Activated naive CD4-positive, alpha-beta T cell treated with anti-CD3 and anti-CD28 coated beads for 36 hours (primary cell): ENCODE measurements at regions of chr7 and their contacts with region 1.

Region 1: GRCh38 chr7:143263266-143264195 is at the start of gene GSTK1:
- DNase-seq: peak; percentile 90
- H3K4me3 Mint-ChIP-seq: peak within 1 kb of the TSS; percentile 96
- H3K27ac Mint-ChIP-seq: peak within 1 kb of the TSS; percentile 96
- H3K4me1 Mint-ChIP-seq: peaks cover 55% of the 10 kb centered on the region
- H3K27me3 Mint-ChIP-seq: no peaks in the 10 kb centered on the region
- total RNA-seq, gene GSTK1: 186 to 187 TPM

Region 2: DNA sequence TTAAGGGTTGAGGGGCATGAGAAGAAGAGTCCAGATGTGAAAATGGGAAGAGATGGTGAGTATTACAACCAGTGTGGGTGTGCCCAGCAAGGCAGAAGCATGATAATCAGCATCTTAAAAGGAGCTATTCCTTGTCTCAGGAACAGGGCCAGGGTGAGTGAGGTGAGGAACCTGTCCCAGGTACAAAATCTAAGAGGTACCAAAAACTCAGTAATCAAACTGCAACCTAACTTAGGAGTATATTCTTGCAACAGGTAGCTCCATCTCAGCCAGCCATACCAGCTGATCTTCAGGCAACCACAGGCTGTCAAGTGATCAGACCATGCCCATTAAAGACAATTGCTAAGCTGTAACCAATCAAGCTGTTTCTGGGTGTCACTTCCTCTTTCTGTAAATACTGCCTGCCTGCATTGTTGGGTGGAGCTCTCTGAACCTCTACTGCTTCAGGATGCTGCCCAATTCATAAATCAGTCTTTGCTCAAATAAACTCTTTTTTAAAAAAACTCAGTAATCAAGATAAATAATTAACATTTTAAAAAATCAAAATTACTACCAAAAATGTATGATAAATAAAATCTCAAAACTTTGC is 308.8 kb before region 1 on chr7:
- CTCF ChIA-PET with region 1: no interaction called
- intact Hi-C with region 1: no loop called
- DNase-seq: no peak
- H3K4me3 Mint-ChIP-seq: no peak overlapping the region
- H3K27ac Mint-ChIP-seq: no peak overlapping the region
- H3K4me1 Mint-ChIP-seq: no peaks in the 10 kb centered on the region
- H3K27me3 Mint-ChIP-seq: peaks cover 2% of the 10 kb centered on the region

Region 3: DNA sequence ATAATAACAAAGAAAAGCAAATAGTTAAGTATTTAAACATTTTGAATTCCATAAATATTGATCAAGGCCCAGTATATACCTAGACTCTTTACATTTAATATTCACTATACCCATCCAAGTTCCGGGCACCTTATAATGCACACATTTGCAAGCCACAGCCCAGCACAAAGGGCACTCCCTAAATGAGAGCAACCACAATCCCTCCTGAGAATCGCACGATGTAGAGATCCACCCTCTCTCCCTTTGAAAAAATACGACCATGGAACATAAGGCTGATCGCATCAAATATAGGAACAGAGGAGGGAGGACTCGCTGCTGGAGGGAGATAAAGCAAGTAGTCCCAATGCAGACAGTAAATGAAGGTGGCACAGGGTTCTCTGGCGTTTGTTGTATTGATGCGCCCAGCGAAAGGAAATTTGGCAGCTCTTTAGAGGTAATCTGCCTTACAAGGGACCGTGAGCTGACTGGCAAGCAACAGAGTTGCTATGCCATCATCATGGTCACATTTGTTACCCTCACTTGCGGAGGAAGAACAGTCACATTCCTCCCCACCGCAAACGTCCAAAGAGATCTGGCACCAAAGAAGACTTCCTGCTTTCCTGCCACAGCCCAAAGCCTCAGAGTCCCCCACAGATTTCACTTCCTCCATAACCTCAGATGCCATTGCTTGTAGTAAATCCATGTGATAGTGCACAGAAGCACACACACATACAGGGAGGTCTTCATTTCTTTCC is 57.8 kb before region 1 on chr7:
- CTCF ChIA-PET with region 1: no interaction called
- intact Hi-C with region 1: no loop called
- DNase-seq: peak; percentile 46
- H3K4me3 Mint-ChIP-seq: peak overlapping the region; percentile 3
- H3K27ac Mint-ChIP-seq: no peak overlapping the region
- H3K4me1 Mint-ChIP-seq: peaks cover 11% of the 10 kb centered on the region
- H3K27me3 Mint-ChIP-seq: peaks cover 3% of the 10 kb centered on the region

Region 4: GRCh38 chr7:143248761-143249354 is 14.7 kb before region 1 on chr7:
- CTCF ChIA-PET with region 1: interaction called, 5 read pairs
- intact Hi-C with region 1: loop called (anchors 1 kb)
- DNase-seq: no peak
- H3K4me3 Mint-ChIP-seq: no peak overlapping the region
- H3K27ac Mint-ChIP-seq: no peak overlapping the region
- H3K4me1 Mint-ChIP-seq: peaks cover 78% of the 10 kb centered on the region
- H3K27me3 Mint-ChIP-seq: no peaks in the 10 kb centered on the region

Region 5: DNA sequence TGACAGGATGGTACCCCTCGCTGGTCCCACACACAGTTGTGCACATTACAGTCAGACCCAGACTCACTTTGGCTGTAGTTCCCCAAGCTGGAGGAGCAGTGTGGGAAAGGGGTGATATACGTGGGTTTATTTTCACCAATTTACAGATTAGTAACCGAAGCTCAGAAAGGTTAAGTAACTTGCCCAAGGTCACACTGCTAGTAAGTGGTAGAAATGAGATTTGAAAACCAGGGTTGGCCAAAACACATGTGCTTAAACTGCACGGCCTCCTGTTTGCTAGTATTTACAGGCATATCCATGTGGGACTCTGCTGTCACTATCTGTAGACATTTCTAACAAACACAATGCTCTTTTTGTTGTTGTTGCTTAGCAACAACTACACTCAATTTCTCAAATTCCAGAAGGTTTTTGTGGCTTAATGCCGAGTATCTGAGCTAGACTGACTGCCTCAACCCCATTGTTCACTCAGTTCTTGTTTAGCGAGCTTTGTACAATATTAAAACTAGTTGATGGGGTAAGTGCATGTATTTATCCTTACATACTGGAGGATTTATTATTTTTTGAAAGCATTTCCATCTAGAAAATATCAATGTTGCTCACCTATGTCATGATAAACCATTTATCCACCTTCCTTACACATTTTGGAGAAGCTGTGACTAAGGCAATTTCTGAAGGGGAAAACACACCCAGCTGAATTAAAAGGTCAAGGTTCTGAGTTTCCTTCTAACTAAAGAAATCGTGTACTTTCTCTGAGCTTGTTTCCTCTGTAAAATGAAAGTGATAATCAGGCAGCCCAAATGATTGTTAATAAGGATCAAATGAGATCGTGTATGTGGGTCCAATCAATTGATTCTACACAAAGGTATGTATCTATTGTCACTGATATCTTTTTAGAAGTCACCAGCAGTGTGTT is 15.9 kb after region 1 on chr7:
- CTCF ChIA-PET with region 1: interaction called, 8 read pairs
- intact Hi-C with region 1: loop called (anchors 1 kb)
- DNase-seq: no peak
- H3K4me3 Mint-ChIP-seq: peak overlapping the region; percentile 77
- H3K27ac Mint-ChIP-seq: peak overlapping the region; percentile 94
- H3K4me1 Mint-ChIP-seq: peaks cover 41% of the 10 kb centered on the region
- H3K27me3 Mint-ChIP-seq: no peaks in the 10 kb centered on the region

Region 6: DNA sequence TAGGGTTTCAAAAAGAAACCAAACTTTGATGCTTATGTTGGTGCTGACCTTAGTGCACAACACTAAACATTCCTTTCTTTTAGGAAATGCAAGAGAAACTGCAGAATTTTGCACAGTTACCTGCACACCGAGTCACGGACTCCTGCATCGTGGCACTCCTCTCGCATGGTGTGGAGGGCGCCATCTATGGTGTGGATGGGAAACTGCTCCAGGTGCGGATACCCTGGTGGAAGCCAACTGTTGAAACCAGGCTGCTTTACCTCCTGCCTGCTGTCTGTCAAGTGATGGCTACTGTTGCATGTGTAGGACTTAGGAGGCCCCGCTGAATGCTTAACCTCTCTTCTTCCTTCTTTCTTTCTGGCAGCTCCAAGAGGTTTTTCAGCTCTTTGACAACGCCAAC is 36.3 kb after region 1 on chr7:
- CTCF ChIA-PET with region 1: interaction called, 11 read pairs
- intact Hi-C with region 1: no loop called
- DNase-seq: peak; percentile 72
- H3K4me3 Mint-ChIP-seq: no peak overlapping the region
- H3K27ac Mint-ChIP-seq: peak overlapping the region; percentile 15
- H3K4me1 Mint-ChIP-seq: peaks cover 31% of the 10 kb centered on the region
- H3K27me3 Mint-ChIP-seq: no peaks in the 10 kb centered on the region